Activated CD4-positive, alpha-beta T cell treated with anti-CD3 and anti-CD28 coated beads for 36 hours (primary cell): ENCODE measurements at regions of chr1 and their contacts with region 1.

Region 1: DNA sequence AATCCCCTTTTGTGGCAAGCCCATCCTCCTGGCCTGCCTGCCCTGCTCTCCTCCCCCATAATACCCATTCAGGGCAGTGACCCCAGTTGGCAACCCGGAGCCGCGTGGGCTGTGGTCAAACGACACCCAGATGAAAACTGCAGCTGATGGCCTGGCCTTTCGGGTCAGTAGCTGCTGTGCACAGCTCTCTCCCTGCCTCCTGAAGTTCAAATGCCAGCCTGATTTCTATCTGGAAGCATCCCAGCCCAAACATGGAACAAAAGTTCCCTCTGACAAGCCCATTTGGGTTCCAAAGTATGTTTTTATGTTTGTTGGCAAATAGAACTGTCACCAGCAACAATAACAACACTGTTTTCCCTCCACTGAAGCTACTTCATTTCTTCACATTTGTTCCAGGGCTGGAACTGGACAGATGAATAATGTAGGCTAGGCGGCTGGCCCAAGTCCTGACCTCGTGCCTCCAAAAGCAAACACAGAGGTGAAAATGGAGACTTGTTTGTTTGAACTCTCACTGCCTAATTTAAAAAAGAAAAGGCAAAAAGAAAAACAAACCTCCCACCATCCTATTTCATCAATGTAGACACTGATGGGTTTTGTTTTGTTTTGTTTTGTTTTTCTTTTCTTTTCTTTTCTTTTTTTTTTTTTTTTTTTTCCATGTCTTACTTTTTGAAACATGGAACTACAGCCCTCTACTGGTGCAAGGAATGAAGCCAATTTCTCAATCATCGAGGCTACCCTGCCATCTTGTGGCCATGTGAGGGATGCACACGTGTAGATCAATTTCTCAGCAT is 179.0 kb downstream of the ADSS2 start:
- DNase-seq: peak; percentile 80
- ATAC-seq: peak; percentile 90
- H3K4me3 Mint-ChIP-seq: no peak overlapping the region
- H3K27ac Mint-ChIP-seq: no peak overlapping the region
- H3K4me1 Mint-ChIP-seq: peaks cover 9% of the 10 kb centered on the region
- H3K27me3 Mint-ChIP-seq: no peaks in the 10 kb centered on the region

Region 2: DNA sequence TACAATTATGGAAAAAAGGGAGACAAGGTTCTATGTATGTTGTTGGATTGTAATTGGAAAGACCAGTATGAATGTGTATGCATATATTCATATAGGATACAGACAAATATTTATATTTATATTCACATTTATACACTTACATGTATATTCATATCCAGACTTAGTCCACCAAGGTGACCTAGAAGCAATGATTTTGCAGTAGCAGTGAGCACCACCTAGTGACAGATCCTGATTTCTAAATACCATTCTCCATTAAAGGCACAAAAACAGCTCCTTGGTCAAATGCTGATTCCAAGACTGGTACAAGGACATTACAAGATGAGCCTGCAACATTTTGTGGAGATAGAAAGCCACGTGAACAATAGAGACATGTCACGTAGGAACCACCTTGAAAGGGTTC is 863.4 kb before region 1 on chr1:
- CTCF ChIA-PET with region 1: no interaction called
- POLR2A ChIA-PET with region 1: no interaction called
- intact Hi-C with region 1: loop called in 1 of 2 experiments (anchors 10 kb)
- DNase-seq: no peak
- ATAC-seq: no peak
- H3K4me3 Mint-ChIP-seq: no peak overlapping the region
- H3K27ac Mint-ChIP-seq: no peak overlapping the region
- H3K4me1 Mint-ChIP-seq: peaks cover 24% of the 10 kb centered on the region
- H3K27me3 Mint-ChIP-seq: no peaks in the 10 kb centered on the region

Region 3: DNA sequence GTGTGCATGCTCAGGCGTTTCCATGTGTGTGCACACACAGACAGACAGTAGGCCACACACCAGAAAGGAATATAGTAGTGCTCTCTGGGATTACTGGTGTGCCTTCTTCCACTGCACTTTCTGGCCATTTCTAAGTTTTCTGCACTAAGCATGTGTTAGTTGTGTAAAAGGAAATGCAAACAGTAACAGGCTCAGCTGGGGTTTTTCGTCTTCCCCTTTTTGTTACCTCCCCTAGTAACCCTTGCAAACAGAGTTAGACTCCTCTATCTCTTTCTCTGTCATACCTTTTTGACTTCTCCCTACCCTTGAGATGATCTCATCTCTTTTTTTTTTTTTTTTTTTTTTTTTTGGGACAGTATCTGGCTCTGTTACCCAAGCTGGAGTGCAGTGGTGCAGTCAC is 820.6 kb before region 1 on chr1:
- CTCF ChIA-PET with region 1: no interaction called
- POLR2A ChIA-PET with region 1: no interaction called
- intact Hi-C with region 1: no loop called
- DNase-seq: no peak
- ATAC-seq: no peak
- H3K4me3 Mint-ChIP-seq: no peak overlapping the region
- H3K27ac Mint-ChIP-seq: no peak overlapping the region
- H3K4me1 Mint-ChIP-seq: peaks cover 2% of the 10 kb centered on the region
- H3K27me3 Mint-ChIP-seq: no peaks in the 10 kb centered on the region

Region 4: DNA sequence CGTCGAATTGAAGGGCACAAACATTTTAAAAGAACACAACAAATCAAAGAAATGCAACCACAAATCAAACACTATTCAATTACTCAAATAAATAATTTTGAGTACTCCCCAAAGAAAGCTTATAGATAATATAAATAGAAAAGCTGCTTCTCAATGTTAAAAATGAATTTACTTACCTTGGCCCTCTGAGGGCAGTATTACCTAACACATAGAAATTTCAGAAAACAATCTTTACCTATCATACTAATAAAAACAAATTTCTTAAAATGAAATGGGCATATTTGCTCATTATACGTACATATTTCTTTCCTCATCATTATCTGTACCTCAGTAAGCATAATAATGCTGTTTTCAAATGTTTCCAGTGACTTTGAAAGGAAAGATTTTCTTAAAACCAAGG is 564.5 kb before region 1 on chr1:
- CTCF ChIA-PET with region 1: interaction called, 3 read pairs
- POLR2A ChIA-PET with region 1: no interaction called
- intact Hi-C with region 1: loop called (anchors 1 to 5 kb)
- DNase-seq: no peak
- ATAC-seq: no peak
- H3K4me3 Mint-ChIP-seq: no peak overlapping the region
- H3K27ac Mint-ChIP-seq: no peak overlapping the region
- H3K4me1 Mint-ChIP-seq: peaks cover 16% of the 10 kb centered on the region
- H3K27me3 Mint-ChIP-seq: no peaks in the 10 kb centered on the region

Region 5: DNA sequence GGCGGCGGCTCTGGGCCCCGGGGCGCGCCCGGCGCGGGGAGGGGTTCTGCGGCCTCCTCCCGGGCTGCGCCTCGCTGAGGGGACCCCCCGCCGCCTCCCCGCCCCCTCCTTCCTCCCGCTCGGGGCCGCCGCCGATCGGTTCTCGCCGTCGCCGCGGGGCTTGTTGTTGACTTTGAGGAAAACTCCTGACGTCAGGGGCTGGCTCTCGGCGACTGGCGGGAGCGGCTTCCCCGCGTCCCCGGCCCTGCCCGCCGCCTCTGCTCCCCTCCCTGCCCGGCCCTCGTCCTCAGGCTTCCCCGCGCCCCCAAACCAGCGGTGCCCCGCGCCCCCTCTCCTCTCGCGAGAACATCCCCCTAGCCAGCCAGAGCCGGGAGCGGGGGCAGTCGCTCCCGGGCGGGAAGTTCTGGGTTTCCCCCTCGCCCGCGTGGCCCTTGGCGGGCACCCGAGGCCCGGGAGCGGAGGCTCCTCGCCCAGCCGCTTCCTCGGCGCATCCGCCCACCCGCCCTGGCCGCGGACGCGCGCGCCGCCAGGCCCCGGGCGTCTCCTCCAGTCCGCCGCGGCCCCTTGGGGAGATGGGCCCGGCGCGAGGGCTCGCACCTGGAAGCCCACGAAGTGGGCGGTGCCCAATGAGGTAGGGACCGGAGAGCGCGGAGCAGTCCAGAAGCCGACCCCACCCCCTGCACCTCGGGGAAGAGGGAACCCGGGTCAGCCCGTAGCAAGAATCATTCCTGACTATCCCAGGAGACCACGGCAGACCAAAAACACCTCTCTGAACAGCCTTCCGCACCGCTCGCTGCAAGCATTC is 422.0 kb before region 1 on chr1:
- CTCF ChIA-PET with region 1: no interaction called
- POLR2A ChIA-PET with region 1: no interaction called
- intact Hi-C with region 1: loop called in 1 of 2 experiments (anchors 1 kb)
- DNase-seq: peak; percentile 92
- ATAC-seq: peak; percentile 50
- H3K4me3 Mint-ChIP-seq: peak overlapping the region; percentile 70
- H3K27ac Mint-ChIP-seq: peak overlapping the region; percentile 92
- H3K4me1 Mint-ChIP-seq: peaks cover 33% of the 10 kb centered on the region
- H3K27me3 Mint-ChIP-seq: peaks cover 2% of the 10 kb centered on the region

Region 6: DNA sequence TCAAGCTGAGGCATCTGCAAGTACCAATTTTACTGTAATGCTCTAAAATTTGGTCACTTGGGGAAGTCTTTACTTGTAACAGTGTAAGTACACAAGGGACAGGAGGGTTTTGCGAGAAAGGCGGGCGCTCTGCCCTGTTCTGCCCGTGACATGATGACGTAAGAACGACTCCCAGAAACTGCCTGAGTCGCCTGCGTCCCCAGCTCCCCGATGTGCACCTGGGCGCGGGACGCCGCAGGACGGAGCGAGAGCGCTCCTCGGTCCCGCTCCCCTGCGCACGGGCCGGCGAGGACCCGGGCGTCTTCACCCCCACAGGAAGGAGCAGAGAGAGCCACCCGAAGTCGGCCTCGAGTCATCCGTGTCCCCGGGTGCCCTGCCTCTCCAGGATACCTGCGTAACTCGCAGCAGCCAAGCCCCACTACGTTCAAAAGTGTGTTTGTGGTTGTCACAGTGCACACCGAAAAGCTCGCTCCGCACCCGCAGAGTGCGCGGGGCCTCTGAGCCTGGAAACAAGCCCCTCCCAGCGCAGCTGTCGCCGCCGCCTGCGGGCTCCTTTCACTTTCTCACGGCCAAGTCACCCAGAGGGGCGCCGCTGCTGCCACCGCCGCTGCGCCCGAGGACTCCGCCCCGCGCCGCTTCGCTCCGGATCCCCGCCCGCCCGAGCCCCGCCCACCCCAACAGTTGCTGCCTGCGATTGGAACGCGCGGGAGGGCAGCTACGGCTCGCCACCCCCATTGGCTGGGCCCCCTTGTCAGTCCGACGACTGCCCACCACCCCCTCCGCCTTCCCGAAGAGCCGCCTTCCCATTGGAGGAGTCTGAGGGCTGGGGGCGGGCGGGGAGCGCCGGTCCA is 224.8 kb before region 1 on chr1:
- CTCF ChIA-PET with region 1: interaction called, 5 read pairs
- POLR2A ChIA-PET with region 1: no interaction called
- intact Hi-C with region 1: loop called in 1 of 2 experiments (anchors 2 kb)
- DNase-seq: peak; percentile 98
- ATAC-seq: peak; percentile 92
- H3K4me3 Mint-ChIP-seq: peak overlapping the region; percentile 93
- H3K27ac Mint-ChIP-seq: peak overlapping the region; percentile 97
- H3K4me1 Mint-ChIP-seq: peaks cover 35% of the 10 kb centered on the region
- H3K27me3 Mint-ChIP-seq: no peaks in the 10 kb centered on the region

Region 7: DNA sequence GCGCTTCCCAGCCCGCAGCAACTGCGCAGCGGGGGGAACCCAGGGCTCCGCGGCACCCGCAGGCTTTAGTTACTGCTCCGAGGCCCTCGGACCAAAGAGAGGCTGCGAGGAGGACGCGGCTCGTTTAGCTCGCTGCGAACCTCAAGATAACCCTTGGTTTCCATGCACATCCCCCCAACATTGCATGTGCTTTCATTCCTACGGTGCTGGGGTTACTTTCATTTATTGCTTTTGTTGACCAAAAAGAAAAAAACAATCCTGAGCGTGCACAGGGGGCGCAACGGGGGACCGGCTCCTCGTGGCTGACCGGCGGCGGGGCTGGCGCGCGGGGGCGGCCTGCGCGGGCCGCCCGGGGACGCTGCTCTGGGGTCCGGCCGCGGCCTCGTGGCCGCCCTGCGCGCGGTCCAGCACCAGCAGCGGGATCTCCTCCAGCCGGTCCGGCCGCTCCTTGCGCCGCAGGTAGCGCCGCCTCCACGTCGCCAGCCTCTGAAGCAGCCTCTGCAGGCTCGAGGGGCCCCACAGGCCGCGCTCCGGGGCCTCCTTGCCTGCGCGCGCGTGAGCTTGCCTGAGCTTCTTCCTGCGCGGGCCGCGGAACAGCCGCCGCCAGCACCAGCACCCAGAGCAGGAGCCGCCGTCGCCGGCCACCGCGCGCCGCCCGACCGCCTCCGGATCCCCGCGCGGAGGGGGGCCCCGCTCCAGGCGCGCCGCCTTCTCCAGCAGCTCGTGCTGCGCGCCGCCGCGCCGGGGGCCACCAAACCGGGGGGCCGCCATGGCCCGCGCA is 457.7 kb after region 1 on chr1:
- CTCF ChIA-PET with region 1: no interaction called
- POLR2A ChIA-PET with region 1: no interaction called
- intact Hi-C with region 1: no loop called
- DNase-seq: peak; percentile 58
- ATAC-seq: peak; percentile 73
- H3K4me3 Mint-ChIP-seq: peak overlapping the region; percentile 74
- H3K27ac Mint-ChIP-seq: peak overlapping the region; percentile 67
- H3K4me1 Mint-ChIP-seq: peaks cover 10% of the 10 kb centered on the region
- H3K27me3 Mint-ChIP-seq: peaks cover 10% of the 10 kb centered on the region